AG04450 (cell line): ENCODE measurements at regions of chr15 and their contacts with region 1.

Region 1: GRCh38 chr15:61034678-61035291 is 194.3 kb downstream of the RORA start:
- DNase-seq: no peak
- H3K4me3 ChIP-seq: 0 out of 2 replicates have a peak overlapping the region, but pooled peaks have one; percentile 3
- H3K27ac ChIP-seq: no peak overlapping the region
- H3K27me3 ChIP-seq: no peaks in the 10 kb centered on the region
- CTCF ChIP-seq: no peak

Region 2: GRCh38 chr15:60932051-60932915 is 102.5 kb before region 1 on chr15:
- CTCF ChIA-PET with region 1: no interaction called
- POLR2A ChIA-PET with region 1: no interaction called
- DNase-seq: no peak
- H3K4me3 ChIP-seq: no peak overlapping the region
- H3K27ac ChIP-seq: no peak overlapping the region
- H3K27me3 ChIP-seq: no peaks in the 10 kb centered on the region
- CTCF ChIP-seq: no peak

Region 3: DNA sequence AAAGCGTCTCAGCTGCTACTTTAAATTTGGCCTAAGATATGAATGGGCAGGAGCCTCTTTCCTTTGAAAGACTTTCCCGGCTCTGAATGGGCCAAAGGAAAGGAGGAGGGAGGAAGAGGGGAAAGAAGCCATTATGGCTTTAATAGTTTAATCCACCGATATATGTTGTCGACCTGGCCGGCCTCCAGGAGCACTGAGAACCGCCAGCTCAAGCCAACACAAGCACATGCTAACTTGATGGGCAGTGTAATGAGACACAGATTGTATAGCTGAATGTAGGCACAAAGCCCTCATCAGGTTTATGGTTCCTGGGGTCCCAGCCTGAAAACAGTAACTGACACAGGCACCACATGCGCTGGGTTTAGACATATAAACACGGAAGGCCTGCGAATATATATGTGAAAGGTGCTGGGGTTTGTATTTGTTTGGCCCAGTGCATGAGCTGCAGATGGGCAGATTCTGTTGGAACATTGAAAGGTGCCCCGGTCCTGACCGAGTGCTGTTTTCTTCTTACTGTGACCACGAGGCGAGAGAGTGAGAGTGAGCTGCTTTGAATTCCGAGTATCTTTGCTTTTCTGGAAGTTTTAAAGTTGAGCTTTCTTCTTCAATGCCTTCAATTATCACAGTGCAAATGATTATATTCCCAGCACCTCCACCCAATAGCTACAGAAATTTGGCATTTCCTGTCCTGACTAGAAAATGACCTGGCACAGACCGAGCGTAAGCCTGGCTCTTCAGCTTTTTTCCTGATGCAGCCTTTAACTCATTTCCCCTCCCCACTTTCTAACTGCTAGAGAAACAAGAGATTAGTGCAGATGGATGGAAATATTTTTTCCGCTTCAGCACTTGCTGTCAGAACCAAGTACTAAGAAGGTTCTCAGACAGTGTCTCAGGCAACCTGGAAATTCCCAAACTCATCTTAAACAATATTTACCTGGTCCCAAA is 73.0 kb before region 1 on chr15:
- CTCF ChIA-PET with region 1: no interaction called
- POLR2A ChIA-PET with region 1: interaction called, 11 read pairs
- DNase-seq: no peak
- H3K4me3 ChIP-seq: no peak overlapping the region
- H3K27ac ChIP-seq: no peak overlapping the region
- H3K27me3 ChIP-seq: no peaks in the 10 kb centered on the region
- CTCF ChIP-seq: no peak

Region 4: GRCh38 chr15:61003403-61004294 is 31.1 kb before region 1 on chr15:
- CTCF ChIA-PET with region 1: no interaction called
- POLR2A ChIA-PET with region 1: no interaction called
- DNase-seq: no peak
- H3K4me3 ChIP-seq: no peak overlapping the region
- H3K27ac ChIP-seq: no peak overlapping the region
- H3K27me3 ChIP-seq: no peaks in the 10 kb centered on the region
- CTCF ChIP-seq: no peak